A673 (cell line): ENCODE measurements at regions of chr5 and their contacts with region 1.

Region 1: GRCh38 chr5:127492854-127493738 is 24.3 kb upstream of the PRRC1 start:
- DNase-seq: peak; percentile 62
- H3K4me3 ChIP-seq: no peak overlapping the region
- H3K27ac ChIP-seq: no peak overlapping the region
- H3K4me1 ChIP-seq: no peaks in the 10 kb centered on the region
- H3K27me3 ChIP-seq: peaks cover 6% of the 10 kb centered on the region
- CTCF ChIP-seq: peak; percentile 94

Region 2: GRCh38 chr5:127358740-127359139 is 134.4 kb before region 1 on chr5:
- CTCF ChIA-PET with region 1: no interaction called
- POLR2A ChIA-PET with region 1: interaction called, 10 read pairs
- intact Hi-C with region 1: no loop called
- DNase-seq: peak; percentile 76
- H3K4me3 ChIP-seq: peak overlapping the region; percentile 11
- H3K27ac ChIP-seq: peak overlapping the region; percentile 93
- H3K4me1 ChIP-seq: peaks cover 54% of the 10 kb centered on the region
- H3K27me3 ChIP-seq: no peaks in the 10 kb centered on the region
- CTCF ChIP-seq: no peak